ENCODE measurements at regions of chr20 and their contacts with region 1.

Region 1: DNA sequence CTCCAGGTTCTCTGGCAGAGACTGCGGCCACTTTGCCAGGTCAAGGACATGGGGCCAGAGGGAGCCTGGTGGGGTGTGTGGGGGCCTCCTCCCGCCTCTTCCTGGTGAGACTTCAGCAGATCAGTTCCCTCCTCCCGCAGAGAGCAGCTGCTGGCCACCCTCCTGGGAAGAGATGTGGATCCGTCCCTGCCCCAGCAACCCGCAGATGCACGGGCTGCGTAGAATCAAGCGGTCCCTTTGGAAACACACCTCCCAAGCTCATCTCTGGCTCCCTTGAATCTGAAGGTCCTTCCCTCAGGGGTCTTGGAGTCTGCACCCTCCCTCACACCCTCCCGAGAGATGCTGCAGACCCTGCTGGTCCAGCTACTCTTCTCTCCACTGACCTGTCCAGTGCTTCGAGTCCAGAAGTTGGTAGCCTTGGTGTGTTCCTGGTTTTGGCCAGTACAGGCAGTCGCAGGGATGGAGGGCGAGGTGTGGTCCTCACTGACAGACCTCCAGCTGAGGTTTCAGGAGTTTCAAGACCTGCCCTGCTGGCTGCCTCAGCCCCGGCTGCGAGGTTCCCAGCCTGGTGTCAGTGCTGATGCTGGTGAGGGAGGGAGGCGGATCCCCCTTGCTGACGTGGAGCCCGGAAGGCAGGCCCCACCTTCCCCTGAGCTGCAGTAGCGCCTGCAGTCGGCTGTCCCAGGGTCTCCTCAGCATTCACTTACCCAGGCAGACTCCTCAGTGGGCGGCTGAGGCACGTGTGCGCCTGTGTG is at the start of gene NPBWR2:
- DNase-seq: no peak
- ATAC-seq: peak; percentile 54
- H3K4me3 ChIP-seq: no peak within 1 kb of the TSS
- H3K27ac ChIP-seq: no peak within 1 kb of the TSS
- H3K4me1 ChIP-seq: no peaks in the 10 kb centered on the region; the same call in 1 of the 2 replicates
- H3K27me3 ChIP-seq: no peaks in the 10 kb centered on the region; a peak in 2 of 4 replicates
- CTCF ChIP-seq: no peak
- EP300 ChIP-seq: no peak
- POLR2A ChIP-seq: no peak
- RAD21 ChIP-seq: no peak
- polyA plus RNA-seq, gene NPBWR2: not detected

Region 2: DNA sequence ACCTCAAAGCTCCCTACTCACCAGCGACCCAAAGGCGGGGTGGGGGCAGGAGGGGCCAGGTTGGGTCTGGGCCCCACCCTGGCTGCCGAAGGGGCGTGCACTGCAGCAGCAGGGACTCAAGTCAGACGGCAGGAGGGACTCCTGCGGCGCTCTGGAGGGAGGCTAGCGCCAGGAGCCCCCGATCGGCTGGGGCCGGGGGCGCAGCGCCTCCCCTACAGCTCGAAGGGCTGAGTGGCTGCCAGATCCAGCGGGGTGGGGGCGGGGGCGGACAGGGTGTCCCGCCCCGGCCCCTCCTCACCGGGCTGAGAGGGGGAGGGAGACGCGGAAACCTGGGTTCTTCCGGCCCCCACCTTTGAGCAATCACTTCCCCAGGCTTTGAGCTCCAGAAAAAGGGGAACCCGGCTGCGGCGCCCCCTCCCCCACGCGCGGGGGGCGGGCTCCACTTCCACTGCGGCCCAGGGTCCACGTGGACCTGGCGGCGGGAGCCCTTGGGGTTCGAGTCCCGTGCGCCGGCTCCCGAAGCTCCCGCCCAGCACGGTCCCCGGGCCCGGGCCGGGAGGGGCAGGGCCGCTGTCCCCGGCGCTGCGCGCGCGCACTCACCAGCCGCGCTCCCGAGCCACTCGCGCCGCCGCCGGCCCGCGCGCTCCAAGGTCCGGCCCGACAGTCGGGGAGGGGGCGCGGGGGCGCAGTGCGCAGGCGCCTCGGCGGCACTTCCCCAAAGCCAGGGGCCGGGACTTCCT is 27.7 kb before region 1 on chr20 and contains the start of gene RGS19:
- CTCF ChIA-PET with region 1: interaction called, 10 read pairs
- POLR2A ChIA-PET with region 1: interaction called, 5 read pairs
- RAD21 ChIA-PET with region 1: interaction called, 16 read pairs
- SMC1A ChIA-PET with region 1: interaction called, 4 read pairs
- in situ Hi-C with region 1: no loop called
- intact Hi-C with region 1: no loop called
- DNase-seq: no peak
- ATAC-seq: peak; percentile 45
- H3K4me3 ChIP-seq: peak within 1 kb of the TSS; percentile 83
- H3K27ac ChIP-seq: peak within 1 kb of the TSS; percentile 85
- H3K4me1 ChIP-seq: peaks cover 26% of the 10 kb centered on the region
- H3K27me3 ChIP-seq: peaks cover 2 to 4% of the 10 kb centered on the region in 2 experiments; a peak in 2 of 4 replicates
- CTCF ChIP-seq: no peak
- EP300 ChIP-seq: no peak
- POLR2A ChIP-seq: peak; percentile 67
- RAD21 ChIP-seq: no peak
- polyA plus RNA-seq, gene RGS19: 0.82 to 3.3 TPM